ENCODE measurements at regions of chr20 and their contacts with region 1.

Region 1: GRCh38 chr20:63442100-63442493 is 30.4 kb downstream of the KCNQ2 start:
- DNase-seq: peak; percentile 75
- ATAC-seq: peak; percentile 63 to 75

Region 2: GRCh38 chr20:63482856-63483695 is 41.0 kb after region 1 on chr20:
- intact Hi-C with region 1: loop called in 1 of 2 experiments (anchors 5 kb)
- DNase-seq: peak; percentile 51
- ATAC-seq: peak; percentile 43 to 48

Region 3: DNA sequence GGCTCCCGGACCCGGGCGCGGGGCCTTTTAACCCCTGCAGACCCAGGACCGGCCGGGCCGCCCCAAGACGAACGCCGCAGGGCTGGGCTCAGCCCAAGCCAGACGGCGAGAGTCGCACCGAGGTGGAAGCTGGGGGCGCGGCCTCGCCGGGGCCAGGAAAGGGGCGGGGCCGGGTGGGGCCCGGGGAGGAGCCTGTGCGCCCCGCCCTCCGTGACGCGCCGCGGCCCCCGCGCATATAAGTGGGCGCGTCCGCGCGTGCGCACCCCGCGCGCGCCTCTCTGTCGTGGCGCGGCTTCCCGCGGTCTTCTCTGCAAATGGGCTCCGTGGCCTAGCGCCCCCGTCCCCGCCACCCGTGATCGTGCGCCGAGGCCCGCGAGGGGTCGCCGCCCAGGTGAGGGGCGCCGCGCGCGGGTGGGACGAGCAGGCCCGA is 78.4 kb after region 1 on chr20 and contains the start of gene PPDPF:
- intact Hi-C with region 1: loop called in 1 of 2 experiments (anchors 10 kb)
- DNase-seq: peak; percentile 86
- ATAC-seq: peak; percentile 91 to 94
- total RNA-seq, gene PPDPF: 215 to 241 TPM